Activated CD4-positive, alpha-beta T cell treated with anti-CD3 and anti-CD28 coated beads, Interleukin-2, amount 10 ng/mL, durations not matched to agents 24 days and 14 days (primary cell): ENCODE measurements at regions of chr6 and their contacts with region 1.

Region 1: DNA sequence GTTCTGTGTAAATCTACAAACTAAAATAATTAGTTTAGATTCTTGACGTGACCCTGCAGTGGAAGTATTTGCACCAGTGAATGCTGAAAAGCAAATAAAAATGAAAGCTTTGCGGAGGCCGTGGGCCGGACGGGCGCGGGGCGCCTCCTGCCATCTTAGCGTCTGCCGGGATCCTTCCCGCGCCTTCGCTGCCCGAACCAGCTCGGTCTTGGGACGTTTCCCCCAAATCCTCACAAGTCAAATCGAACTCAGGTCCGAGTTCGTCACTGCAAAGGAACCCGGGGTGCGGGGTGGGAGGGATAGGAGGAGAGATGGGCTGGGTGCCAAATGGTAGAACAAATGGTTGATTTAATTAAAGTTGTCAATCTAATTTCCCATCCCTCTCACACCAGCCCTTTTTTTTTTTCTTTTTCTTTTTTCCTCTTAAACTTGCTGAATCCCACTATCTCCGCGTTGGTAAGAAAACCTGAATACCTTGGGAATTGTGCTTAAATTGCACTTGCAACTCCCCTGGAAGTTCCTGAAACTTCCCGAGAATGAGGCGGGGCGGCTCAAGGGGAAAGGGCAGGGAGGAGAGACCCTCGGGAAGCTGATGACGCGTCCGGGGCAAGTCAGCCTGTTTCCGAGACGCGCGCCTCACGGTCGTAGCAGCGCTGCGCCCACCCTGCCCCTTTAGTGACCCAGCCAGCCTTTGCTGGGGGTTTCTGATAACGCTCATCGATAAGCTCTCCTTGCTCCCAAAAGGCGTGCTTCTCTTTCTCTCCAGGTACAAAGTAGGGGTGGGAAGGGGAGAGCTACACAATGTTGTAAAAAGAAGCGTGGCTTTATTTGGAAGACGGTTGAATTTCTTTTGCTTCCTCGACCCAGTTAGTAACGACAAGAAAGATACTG is 1.8 kb downstream of the GJA1 start:
- DNase-seq: peak; percentile 68
- H3K4me3 Mint-ChIP-seq: peak overlapping the region; percentile 80
- H3K27ac Mint-ChIP-seq: no peak overlapping the region
- H3K4me1 Mint-ChIP-seq: peaks cover 10% of the 10 kb centered on the region
- H3K27me3 Mint-ChIP-seq: peaks cover 34% of the 10 kb centered on the region

Region 2: GRCh38 chr6:121615493-121615892 is 178.3 kb after region 1 on chr6:
- intact Hi-C with region 1: no loop called
- DNase-seq: no peak
- H3K4me3 Mint-ChIP-seq: no peak overlapping the region
- H3K27ac Mint-ChIP-seq: no peak overlapping the region
- H3K4me1 Mint-ChIP-seq: no peaks in the 10 kb centered on the region
- H3K27me3 Mint-ChIP-seq: peaks cover 2% of the 10 kb centered on the region

Region 3: DNA sequence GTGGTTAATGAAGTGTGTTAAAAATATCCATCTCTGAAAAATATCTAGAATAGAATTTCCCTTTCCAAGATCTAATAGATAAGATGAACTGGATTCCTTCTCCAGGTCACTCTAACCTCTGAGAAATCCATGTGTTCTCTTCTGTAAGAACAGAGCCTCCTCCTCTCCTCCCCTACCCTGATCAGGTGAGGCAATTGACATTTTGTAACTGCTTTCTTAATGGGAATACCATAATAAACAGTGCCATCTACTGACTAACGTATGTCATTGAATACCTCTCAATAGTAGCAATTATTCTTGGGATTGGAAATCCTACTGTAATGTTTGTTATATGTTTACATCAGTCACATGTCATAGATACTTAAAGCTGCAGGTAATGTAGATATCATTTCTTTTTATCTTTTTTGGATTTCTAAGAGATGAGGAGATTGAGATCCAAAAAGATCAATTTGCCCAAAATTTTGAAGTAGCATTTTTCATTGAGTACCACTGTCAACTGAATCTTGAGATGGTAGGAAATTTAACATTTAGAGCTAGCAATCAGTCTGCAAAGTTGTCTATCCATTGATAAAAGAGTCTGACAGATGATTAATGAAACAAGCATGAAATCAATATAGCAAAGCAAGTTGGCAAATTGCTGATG is 596.5 kb after region 1 on chr6:
- intact Hi-C with region 1: loop called (anchors 5 kb)
- DNase-seq: no peak
- H3K4me3 Mint-ChIP-seq: no peak overlapping the region
- H3K27ac Mint-ChIP-seq: no peak overlapping the region
- H3K4me1 Mint-ChIP-seq: peaks cover 3% of the 10 kb centered on the region
- H3K27me3 Mint-ChIP-seq: no peaks in the 10 kb centered on the region